Naive thymus-derived CD4-positive, alpha-beta T cell (primary cell): ENCODE measurements at regions of chr22 and their contacts with region 1.

Region 1: GRCh38 chr22:36454916-36455570 is 26.4 kb downstream of the TXN2 start:
- DNase-seq: peak; percentile 87 to 97 (median 92)
- ATAC-seq: peak; percentile 83
- H3K4me3 ChIP-seq: peak overlapping the region; percentile 83
- H3K4me3 Mint-ChIP-seq: peak overlapping the region; percentile 68 to 87 (median 78)
- H3K27ac ChIP-seq: peak overlapping the region; percentile 99
- H3K27ac Mint-ChIP-seq: peak overlapping the region; percentile 71 to 99 (median 96)
- H3K4me1 ChIP-seq: peaks cover 46 to 48% of the 10 kb centered on the region in 2 donors
- H3K4me1 Mint-ChIP-seq: peaks cover 21 to 54% (median 45%) of the 10 kb centered on the region in 7 donors
- H3K27me3 ChIP-seq: no peaks in the 10 kb centered on the region
- H3K27me3 Mint-ChIP-seq: no peaks in the 10 kb centered on the region

Region 2: GRCh38 chr22:36301384-36301828 is 153.6 kb before region 1 on chr22:
- CTCF ChIA-PET with region 1: interaction called, 3 read pairs
- POLR2A ChIA-PET with region 1: no interaction called
- intact Hi-C with region 1: loop called in 1 of 2 experiments (anchors 1 kb)
- DNase-seq: peak; percentile 68 to 86 (median 80)
- ATAC-seq: peak; percentile 94
- H3K4me3 ChIP-seq: no peak overlapping the region
- H3K4me3 Mint-ChIP-seq: peak overlapping the region in 3 of 10 donors; percentile 6 to 40 (median 26)
- H3K27ac ChIP-seq: peak overlapping the region; percentile 15
- H3K27ac Mint-ChIP-seq: peak overlapping the region; percentile 56 to 81 (median 76)
- H3K4me1 ChIP-seq: peaks cover 0 to 3% of the 10 kb centered on the region in 2 donors
- H3K4me1 Mint-ChIP-seq: peaks cover 4 to 14% (median 11%) of the 10 kb centered on the region in 7 donors
- H3K27me3 ChIP-seq: no peaks in the 10 kb centered on the region
- H3K27me3 Mint-ChIP-seq: no peaks in the 10 kb centered on the region

Region 3: DNA sequence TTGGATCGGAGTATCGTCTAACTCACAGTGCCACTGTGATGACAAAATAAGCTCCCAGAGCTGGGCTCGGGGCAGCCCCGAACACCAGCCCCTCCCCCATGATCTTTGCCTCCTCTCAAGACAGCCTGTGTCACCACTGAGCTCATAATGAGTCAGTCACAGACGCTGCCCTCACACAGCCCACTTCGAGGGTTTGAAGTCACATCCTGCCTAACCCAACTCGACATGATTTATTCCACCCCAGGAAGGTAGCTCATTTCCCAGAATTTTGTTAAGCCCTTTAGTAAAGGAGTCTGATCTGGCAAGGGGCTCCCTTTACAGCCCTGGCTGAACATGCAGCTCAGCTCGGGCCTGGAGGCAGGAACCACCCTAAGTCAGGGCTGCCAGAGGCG is 90.0 kb before region 1 on chr22:
- CTCF ChIA-PET with region 1: no interaction called
- POLR2A ChIA-PET with region 1: interaction called, 3 read pairs
- intact Hi-C with region 1: loop called in 1 of 2 experiments (anchors 5 kb)
- DNase-seq: peak; percentile 55 to 98 (median 83)
- ATAC-seq: peak; percentile 97
- H3K4me3 ChIP-seq: no peak overlapping the region
- H3K4me3 Mint-ChIP-seq: peak overlapping the region; percentile 58 to 88 (median 82)
- H3K27ac ChIP-seq: peak overlapping the region; percentile 93
- H3K27ac Mint-ChIP-seq: peak overlapping the region; percentile 91 to 98 (median 96)
- H3K4me1 ChIP-seq: peaks cover 97 to 98% of the 10 kb centered on the region in 2 donors
- H3K4me1 Mint-ChIP-seq: peaks cover 73 to 100% (median 95%) of the 10 kb centered on the region in 7 donors
- H3K27me3 ChIP-seq: no peaks in the 10 kb centered on the region
- H3K27me3 Mint-ChIP-seq: no peaks in the 10 kb centered on the region

Region 4: GRCh38 chr22:36409911-36410756 is 44.9 kb before region 1 on chr22:
- CTCF ChIA-PET with region 1: interaction called, 4 read pairs
- POLR2A ChIA-PET with region 1: interaction called, 6 read pairs
- intact Hi-C with region 1: loop called in 1 of 2 experiments (anchors 1 kb)
- DNase-seq: peak; percentile 46 to 77 (median 70)
- ATAC-seq: peak; percentile 89
- H3K4me3 ChIP-seq: peak overlapping the region; percentile 28
- H3K4me3 Mint-ChIP-seq: peak overlapping the region; percentile 59 to 82 (median 74)
- H3K27ac ChIP-seq: peak overlapping the region; percentile 70
- H3K27ac Mint-ChIP-seq: peak overlapping the region; percentile 69 to 92 (median 87)
- H3K4me1 ChIP-seq: peaks cover 31 to 40% of the 10 kb centered on the region in 2 donors
- H3K4me1 Mint-ChIP-seq: peaks cover 26 to 63% (median 55%) of the 10 kb centered on the region in 7 donors
- H3K27me3 ChIP-seq: no peaks in the 10 kb centered on the region
- H3K27me3 Mint-ChIP-seq: no peaks in the 10 kb centered on the region

Region 5: DNA sequence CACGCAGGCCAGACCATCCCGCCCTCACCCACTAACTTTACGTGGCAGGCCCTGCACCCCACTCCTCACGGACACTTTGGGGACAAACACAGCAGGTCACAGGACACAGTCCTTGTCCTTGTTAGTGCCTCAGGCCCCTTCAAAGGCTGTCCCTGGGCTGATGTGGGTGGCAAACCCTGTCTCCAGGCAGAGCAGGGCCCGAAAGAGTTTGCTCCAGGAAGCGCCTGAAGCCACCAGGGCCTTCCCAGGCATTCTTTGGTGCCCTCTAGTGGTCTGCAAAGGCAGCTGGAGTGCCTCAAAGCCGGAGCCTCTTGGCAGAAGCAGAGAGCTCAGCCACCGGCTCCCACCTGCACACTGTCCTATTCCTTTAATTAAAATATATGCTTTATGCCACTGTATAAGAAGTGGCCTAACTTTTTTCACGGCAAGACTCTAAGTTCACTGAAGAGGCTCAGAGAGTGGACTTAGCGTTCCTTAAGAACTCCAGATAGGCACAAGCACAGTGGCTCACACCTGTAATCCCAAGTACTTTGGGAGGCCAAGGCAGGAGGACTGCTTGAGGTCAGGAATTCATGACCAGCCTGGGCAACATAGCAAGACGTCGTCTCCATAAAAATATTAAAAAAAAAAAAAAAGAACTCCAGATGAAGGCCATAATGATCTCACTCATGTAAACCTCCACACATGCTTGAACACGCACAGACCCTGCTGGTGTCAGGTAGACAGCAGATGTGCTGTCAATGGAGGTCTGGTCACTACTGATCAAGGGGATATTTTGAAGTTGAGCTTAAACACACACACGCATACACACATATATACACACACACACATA is 15.3 kb after region 1 on chr22:
- CTCF ChIA-PET with region 1: interaction called, 11 read pairs
- POLR2A ChIA-PET with region 1: interaction called, 6 read pairs
- intact Hi-C with region 1: loop called (anchors 1 kb)
- DNase-seq: peak; percentile 58 to 90 (median 87)
- ATAC-seq: peak; percentile 97
- H3K4me3 ChIP-seq: no peak overlapping the region
- H3K4me3 Mint-ChIP-seq: peak overlapping the region in 2 of 10 donors; percentile 18 to 30
- H3K27ac ChIP-seq: peak overlapping the region; percentile 34
- H3K27ac Mint-ChIP-seq: peak overlapping the region in 7 of 9 donors; percentile 57 to 87 (median 69)
- H3K4me1 ChIP-seq: peaks cover 6 to 18% of the 10 kb centered on the region in 2 donors
- H3K4me1 Mint-ChIP-seq: peaks cover 9 to 32% (median 25%) of the 10 kb centered on the region in 7 donors
- H3K27me3 ChIP-seq: no peaks in the 10 kb centered on the region
- H3K27me3 Mint-ChIP-seq: no peaks in the 10 kb centered on the region

Region 6: GRCh38 chr22:36506637-36507517 is 51.8 kb after region 1 on chr22 and contains the start of gene FOXRED2:
- CTCF ChIA-PET with region 1: no interaction called
- POLR2A ChIA-PET with region 1: no interaction called
- intact Hi-C with region 1: loop called in 1 of 2 experiments (anchors 1 kb)
- DNase-seq: peak; percentile 85 to 95 (median 91)
- ATAC-seq: peak; percentile 98
- H3K4me3 ChIP-seq: peak within 1 kb of the TSS; percentile 67
- H3K4me3 Mint-ChIP-seq: peak within 1 kb of the TSS; percentile 39 to 84 (median 71)
- H3K27ac ChIP-seq: peak within 1 kb of the TSS; percentile 72
- H3K27ac Mint-ChIP-seq: peak within 1 kb of the TSS; percentile 26 to 84 (median 62)
- H3K4me1 ChIP-seq: peaks cover 5 to 11% of the 10 kb centered on the region in 2 donors
- H3K4me1 Mint-ChIP-seq: peaks cover 8 to 23% (median 14%) of the 10 kb centered on the region in 7 donors
- H3K27me3 ChIP-seq: no peaks in the 10 kb centered on the region
- H3K27me3 Mint-ChIP-seq: no peaks in the 10 kb centered on the region
- total RNA-seq, gene FOXRED2: 2.3 to 13.1 (median 11.4) TPM

Region 7: DNA sequence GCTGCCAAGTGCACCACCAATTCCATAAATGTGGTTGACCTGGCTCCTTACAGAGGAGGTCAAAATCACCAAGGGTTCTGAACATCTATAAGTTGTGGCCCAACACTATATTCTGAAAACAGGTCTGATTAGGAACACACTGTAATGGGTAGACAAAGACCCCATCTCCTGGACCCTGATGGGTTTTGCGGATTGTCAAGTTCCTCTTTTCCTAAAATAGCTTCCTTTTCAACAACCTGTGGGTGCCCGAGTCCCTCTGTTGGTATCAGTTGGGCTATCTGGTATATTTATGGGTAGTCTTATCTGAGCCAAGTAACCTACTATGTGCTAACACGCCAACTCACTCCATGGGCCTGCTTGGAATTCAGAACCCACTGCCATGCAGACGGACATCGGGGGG is 258.4 kb after region 1 on chr22:
- CTCF ChIA-PET with region 1: no interaction called
- POLR2A ChIA-PET with region 1: no interaction called
- intact Hi-C with region 1: no loop called
- DNase-seq: no peak
- ATAC-seq: no peak
- H3K4me3 ChIP-seq: no peak overlapping the region
- H3K4me3 Mint-ChIP-seq: no peak overlapping the region
- H3K27ac ChIP-seq: no peak overlapping the region
- H3K27ac Mint-ChIP-seq: no peak overlapping the region
- H3K4me1 ChIP-seq: no peaks in the 10 kb centered on the region
- H3K4me1 Mint-ChIP-seq: peaks cover 0 to 3% (median 0%) of the 10 kb centered on the region in 7 donors
- H3K27me3 ChIP-seq: no peaks in the 10 kb centered on the region
- H3K27me3 Mint-ChIP-seq: peaks cover 13 to 43% (median 31%) of the 10 kb centered on the region in 5 donors